ENCODE measurements at regions of chr17 and their contacts with region 1.

Region 1: GRCh38 chr17:8138672-8139371 is 13.4 kb downstream of the PER1 start:
- DNase-seq: peak; percentile 94
- H3K4me3 ChIP-seq: peak overlapping the region; percentile 57 to 62
- H3K27ac ChIP-seq: peak overlapping the region; percentile 77 to 78
- H3K4me1 ChIP-seq: peaks cover 0 to 5% of the 10 kb centered on the region in 2 experiments; a peak in 1 of 4 replicates
- H3K27me3 ChIP-seq: no peaks in the 10 kb centered on the region
- CTCF ChIP-seq: peak; percentile 91
- EP300 ChIP-seq: peak in 1 of 2 experiments; percentile 24; a peak in 1 of 4 replicates
- RAD21 ChIP-seq: peak; percentile 78

Region 2: GRCh38 chr17:8125157-8125946 is 13.5 kb before region 1 on chr17:
- CTCF ChIA-PET with region 1: interaction called, 50 read pairs
- POLR2A ChIA-PET with region 1: interaction called, 6 read pairs
- DNase-seq: peak; percentile 88
- H3K4me3 ChIP-seq: peak overlapping the region; percentile 53 to 81
- H3K27ac ChIP-seq: peak overlapping the region; percentile 17 to 54; a peak in 2 of 4 replicates
- H3K4me1 ChIP-seq: peaks cover 0 to 32% of the 10 kb centered on the region in 2 experiments; a peak in 1 of 4 replicates
- H3K27me3 ChIP-seq: no peaks in the 10 kb centered on the region; the same call in 1 of the 2 replicates
- CTCF ChIP-seq: no peak
- EP300 ChIP-seq: no peak
- RAD21 ChIP-seq: no peak

Region 3: DNA sequence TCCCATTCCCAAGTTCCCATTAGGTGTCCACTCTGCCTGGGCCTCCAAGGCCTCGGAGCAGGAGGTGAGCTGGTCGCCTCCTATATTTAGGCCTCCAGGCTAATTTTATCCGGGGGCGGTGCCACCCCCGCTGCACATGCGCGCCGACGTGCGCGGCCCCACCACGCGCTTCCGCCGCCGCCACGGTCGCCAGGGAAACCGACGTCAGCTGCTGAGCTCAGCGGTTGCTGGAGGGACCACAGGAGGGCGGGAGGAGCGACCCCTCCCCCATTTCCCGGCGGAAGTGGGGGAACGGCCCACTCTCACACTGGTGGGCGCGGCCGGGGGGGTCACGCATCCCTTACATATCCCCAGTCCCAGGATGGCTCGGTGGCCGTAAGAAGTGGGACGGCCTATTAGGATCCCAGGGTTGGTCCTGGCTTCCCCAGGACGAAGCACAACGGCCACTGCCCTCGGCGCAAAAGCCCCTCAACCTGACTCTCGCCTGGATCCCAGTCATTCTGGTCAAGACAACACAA is 12.4 kb after region 1 on chr17:
- CTCF ChIA-PET with region 1: interaction called, 98 read pairs
- POLR2A ChIA-PET with region 1: interaction called, 19 read pairs
- DNase-seq: peak; percentile 93
- H3K4me3 ChIP-seq: peak overlapping the region; percentile 77 to 80
- H3K27ac ChIP-seq: peak overlapping the region; percentile 82 to 95
- H3K4me1 ChIP-seq: peaks cover 36 to 42% of the 10 kb centered on the region in 2 experiments; a peak in 3 of 4 replicates
- H3K27me3 ChIP-seq: no peaks in the 10 kb centered on the region
- CTCF ChIP-seq: no peak
- EP300 ChIP-seq: no peak
- RAD21 ChIP-seq: no peak